ENCODE measurements at regions of chr9 and their contacts with region 1.

Region 1: DNA sequence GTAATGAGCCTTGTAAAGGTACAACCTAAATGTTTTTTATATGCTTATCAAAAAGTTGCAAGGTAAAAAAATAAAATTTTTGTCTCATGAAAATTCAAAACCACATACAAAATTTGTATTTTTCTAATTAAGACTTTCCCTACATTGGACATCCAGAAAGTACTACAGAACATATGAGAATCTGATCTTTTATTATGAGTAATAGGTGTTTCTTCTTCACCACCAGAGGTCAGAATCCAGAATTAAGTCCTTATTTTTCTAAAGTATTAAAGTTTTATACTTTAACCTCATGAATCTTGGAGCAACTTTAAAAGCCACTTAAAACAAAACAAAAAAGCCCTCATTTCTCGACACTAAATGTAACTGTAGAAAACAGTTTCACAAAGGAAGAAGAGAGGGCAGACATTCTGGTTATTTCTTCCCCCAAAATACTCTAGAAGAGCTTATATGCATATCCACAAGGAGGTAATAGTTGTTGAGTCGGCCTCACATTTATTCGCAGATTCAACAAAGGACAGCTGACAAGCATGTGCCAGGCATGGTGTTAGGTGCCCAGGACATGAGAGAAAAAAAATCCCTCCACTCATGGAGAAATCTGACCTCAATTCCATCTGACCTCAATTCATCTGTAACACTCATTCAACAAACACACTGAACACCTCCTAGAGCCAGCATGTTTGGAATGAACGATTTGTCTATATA is 69.3 kb downstream of the MLLT3 start:
- DNase-seq: peak in 2 of 14 experiments; percentile 16
- ATAC-seq: peak; percentile 21
- H3K4me3 ChIP-seq: no peak overlapping the region
- H3K4me3 Mint-ChIP-seq: peak overlapping the region; percentile 32
- H3K27ac ChIP-seq: no peak overlapping the region
- H3K27ac Mint-ChIP-seq: peak overlapping the region; percentile 55
- H3K4me1 ChIP-seq: peaks cover 16% of the 10 kb centered on the region
- H3K4me1 Mint-ChIP-seq: peaks cover 76% of the 10 kb centered on the region
- H3K27me3 ChIP-seq: no peaks in the 10 kb centered on the region
- H3K27me3 Mint-ChIP-seq: no peaks in the 10 kb centered on the region
- CTCF ChIP-seq: peak; percentile 9

Region 2: DNA sequence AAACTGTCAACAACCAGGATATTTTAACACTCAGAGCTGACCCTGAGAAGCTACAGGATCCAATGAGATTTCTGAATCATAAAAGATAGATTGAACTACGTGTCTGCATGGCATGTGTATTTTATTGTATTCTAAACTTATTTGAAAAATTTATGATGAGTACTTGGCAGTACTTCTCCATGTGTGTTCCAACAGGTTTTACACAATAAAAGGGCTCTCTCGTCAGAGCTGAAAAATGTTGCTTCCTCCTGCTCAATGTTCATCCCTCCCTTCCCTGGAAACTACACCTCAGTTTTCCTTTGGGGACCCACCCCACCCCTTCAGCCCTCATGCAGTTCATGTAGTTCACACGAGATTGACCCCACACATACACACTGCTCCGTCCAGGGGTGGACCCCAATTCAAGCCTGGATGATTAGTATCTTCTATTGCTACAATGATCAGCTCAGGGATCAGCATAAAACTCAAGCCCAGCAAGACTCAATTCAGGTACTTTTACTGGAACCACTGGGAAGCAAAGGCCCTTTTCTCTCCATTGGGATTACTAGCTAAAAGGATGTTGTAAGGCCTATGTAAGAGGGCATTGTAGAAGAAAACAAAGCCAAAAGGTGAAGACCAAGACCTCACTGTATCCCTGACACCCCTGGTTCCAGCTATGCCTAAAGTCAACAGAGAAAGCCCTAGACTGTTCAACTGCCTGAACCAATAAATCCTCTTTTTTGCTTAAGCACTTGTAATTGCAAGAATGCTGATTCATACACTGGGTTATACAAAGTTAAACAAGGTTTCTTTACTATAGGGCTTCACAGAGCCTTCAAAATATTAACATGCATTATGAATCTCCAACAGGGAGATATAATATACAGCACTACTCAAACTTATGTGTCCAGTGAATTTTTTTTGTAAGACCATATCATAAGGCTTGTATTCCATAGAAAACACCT is 1632.6 kb before region 1 on chr9:
- CTCF ChIA-PET with region 1: no interaction called
- POLR2A ChIA-PET with region 1: no interaction called
- intact Hi-C with region 1: no loop called
- DNase-seq: no peak
- ATAC-seq: no peak
- H3K4me3 ChIP-seq: no peak overlapping the region
- H3K4me3 Mint-ChIP-seq: no peak overlapping the region
- H3K27ac ChIP-seq: no peak overlapping the region
- H3K27ac Mint-ChIP-seq: no peak overlapping the region
- H3K4me1 ChIP-seq: no peaks in the 10 kb centered on the region
- H3K4me1 Mint-ChIP-seq: no peaks in the 10 kb centered on the region
- H3K27me3 ChIP-seq: no peaks in the 10 kb centered on the region
- H3K27me3 Mint-ChIP-seq: no peaks in the 10 kb centered on the region
- CTCF ChIP-seq: no peak

Region 3: DNA sequence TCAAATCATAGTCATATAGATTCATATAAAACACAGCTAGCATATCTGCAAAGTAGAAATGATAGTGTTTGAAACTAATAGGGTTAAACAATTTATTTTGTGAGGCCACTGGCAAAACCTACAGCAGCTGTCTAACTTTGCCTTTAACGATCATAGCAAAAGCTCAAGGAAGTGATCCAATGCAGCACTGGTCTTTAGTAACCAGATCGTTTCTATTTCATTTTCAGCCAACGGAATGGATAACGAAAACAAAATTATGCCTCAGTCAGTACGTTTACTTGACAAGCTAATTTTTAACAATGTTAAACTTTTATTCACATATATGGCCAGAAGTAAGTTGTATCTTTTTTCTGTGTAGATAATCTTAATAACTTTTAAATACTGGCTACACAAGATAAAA is 51.5 kb after region 1 on chr9:
- CTCF ChIA-PET with region 1: no interaction called
- POLR2A ChIA-PET with region 1: interaction called, 3 read pairs
- intact Hi-C with region 1: loop called in 1 of 2 experiments (anchors 5 kb)
- DNase-seq: peak in 3 of 14 experiments; percentile 28 to 34 (median 30)
- ATAC-seq: peak; percentile 59
- H3K4me3 ChIP-seq: no peak overlapping the region
- H3K4me3 Mint-ChIP-seq: peak overlapping the region; percentile 46
- H3K27ac ChIP-seq: no peak overlapping the region
- H3K27ac Mint-ChIP-seq: peak overlapping the region; percentile 15
- H3K4me1 ChIP-seq: no peaks in the 10 kb centered on the region
- H3K4me1 Mint-ChIP-seq: peaks cover 92% of the 10 kb centered on the region
- H3K27me3 ChIP-seq: no peaks in the 10 kb centered on the region
- H3K27me3 Mint-ChIP-seq: no peaks in the 10 kb centered on the region
- CTCF ChIP-seq: no peak

Region 4: GRCh38 chr9:20744036-20744630 is 191.1 kb after region 1 on chr9:
- CTCF ChIA-PET with region 1: no interaction called
- POLR2A ChIA-PET with region 1: no interaction called
- intact Hi-C with region 1: no loop called
- DNase-seq: no peak
- ATAC-seq: no peak
- H3K4me3 ChIP-seq: no peak overlapping the region
- H3K4me3 Mint-ChIP-seq: no peak overlapping the region
- H3K27ac ChIP-seq: no peak overlapping the region
- H3K27ac Mint-ChIP-seq: no peak overlapping the region
- H3K4me1 ChIP-seq: no peaks in the 10 kb centered on the region
- H3K4me1 Mint-ChIP-seq: peaks cover 15% of the 10 kb centered on the region
- H3K27me3 ChIP-seq: no peaks in the 10 kb centered on the region
- H3K27me3 Mint-ChIP-seq: no peaks in the 10 kb centered on the region
- CTCF ChIP-seq: no peak